Astrocyte of the spinal cord (primary cell): ENCODE measurements at regions of chr1 and their contacts with region 1.

Region 1: GRCh38 chr1:229296541-229296941 is 25.6 kb downstream of the RAB4A start:
- DNase-seq: peak; percentile 41
- H3K4me3 ChIP-seq: no peak overlapping the region
- CTCF ChIP-seq: no peak

Region 2: DNA sequence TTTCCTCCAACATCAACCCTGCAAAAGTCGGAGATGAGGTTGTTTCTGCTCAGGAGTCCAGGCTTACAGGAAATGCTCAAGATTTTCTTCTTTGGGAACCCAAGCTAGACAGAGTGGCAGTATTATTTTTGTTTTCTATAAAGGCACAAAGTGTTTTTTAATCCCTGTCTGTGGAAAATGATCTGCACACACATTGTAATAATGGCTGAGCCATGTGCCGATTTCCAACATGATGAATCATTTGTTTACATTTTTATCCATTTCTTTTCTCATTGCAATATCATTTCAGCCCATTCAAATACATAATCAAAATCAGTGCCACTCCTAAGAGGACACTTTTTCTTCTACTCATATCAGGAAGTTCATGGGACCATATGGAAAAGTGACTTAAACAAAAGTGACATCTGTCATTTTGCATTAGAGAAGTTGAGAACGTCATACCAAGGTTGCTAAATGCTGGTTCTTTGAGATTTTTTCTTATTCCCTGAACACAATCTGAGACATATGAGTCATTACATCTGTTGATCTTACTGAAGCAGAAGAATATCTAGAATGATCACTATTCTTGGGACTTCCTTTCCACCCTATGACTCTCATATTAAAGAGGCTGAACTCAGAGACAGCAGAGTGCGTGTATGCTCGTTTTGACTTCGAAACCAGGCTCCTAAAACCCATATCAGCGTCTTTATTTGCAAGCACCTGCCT is 92.5 kb after region 1 on chr1:
- in situ Hi-C with region 1: no loop called
- DNase-seq: peak; percentile 34
- H3K4me3 ChIP-seq: no peak overlapping the region
- CTCF ChIP-seq: no peak

Region 3: DNA sequence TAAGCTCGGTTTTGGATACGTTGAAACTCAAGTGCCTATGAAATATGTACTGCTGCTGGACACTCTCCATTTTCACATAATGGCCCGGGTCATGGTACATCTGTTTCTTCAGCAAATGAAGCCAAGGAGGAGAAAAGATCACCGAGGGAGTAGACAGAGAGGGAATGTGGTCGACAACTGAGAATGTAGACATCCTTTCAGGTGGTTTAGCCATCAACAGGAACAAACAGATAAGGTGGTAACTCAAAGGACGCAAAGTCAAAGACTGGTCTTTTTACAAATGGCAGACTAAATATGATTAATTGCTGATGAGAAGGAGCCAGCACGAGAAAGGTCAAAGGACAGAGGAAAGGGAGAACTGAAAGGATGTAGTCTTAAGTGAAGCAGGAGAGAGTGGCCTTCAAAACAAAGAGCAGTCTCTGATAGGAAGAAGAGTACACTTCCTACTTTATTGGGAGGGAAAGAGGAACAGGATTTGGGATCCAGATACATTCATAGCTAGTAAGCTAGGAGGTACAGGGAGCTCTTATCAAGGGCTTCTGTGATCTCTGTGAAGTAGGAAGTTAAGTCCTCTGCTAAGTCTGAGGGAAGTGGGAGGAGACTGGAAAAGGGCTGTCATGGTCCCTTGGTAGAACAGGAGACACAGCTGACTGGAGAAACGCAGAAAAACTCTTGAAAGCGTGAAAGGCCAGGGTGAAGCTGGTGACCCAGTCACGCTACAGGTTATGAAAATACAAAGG is 183.3 kb after region 1 on chr1:
- in situ Hi-C with region 1: loop called (anchors 25 kb)
- DNase-seq: no peak
- H3K4me3 ChIP-seq: no peak overlapping the region
- CTCF ChIP-seq: no peak